Breast epithelium (tissue), 4 donors: ENCODE measurements at regions of chr12 and their contacts with region 1.

Region 1: GRCh38 chr12:55973598-55974307 is at the start of gene RAB5B:
- DNase-seq: peak; percentile 99 to 100
- H3K4me3 ChIP-seq: peak within 1 kb of the TSS; percentile 83 to 97 (median 96)
- H3K27ac ChIP-seq: peak within 1 kb of the TSS; percentile 97 to 98
- H3K4me1 ChIP-seq: no peaks in the 10 kb centered on the region
- H3K27me3 ChIP-seq: no peaks in the 10 kb centered on the region
- CTCF ChIP-seq: peak in 1 of 3 donors; percentile 10
- POLR2A ChIP-seq: peak; percentile 94
- total RNA-seq, gene RAB5B: 74.9 to 98.8 (median 75.7) TPM

Region 2: GRCh38 chr12:57101844-57102695 is 1128.3 kb after region 1 on chr12:
- intact Hi-C with region 1: loop called (anchors 10 kb)
- DNase-seq: no peak
- H3K4me3 ChIP-seq: no peak overlapping the region
- H3K27ac ChIP-seq: peak overlapping the region; percentile 53 to 61
- H3K4me1 ChIP-seq: no peaks in the 10 kb centered on the region
- H3K27me3 ChIP-seq: no peaks in the 10 kb centered on the region
- CTCF ChIP-seq: no peak
- POLR2A ChIP-seq: no peak